Transverse colon (tissue), 4 donors: ENCODE measurements at regions of chr16 and their contacts with region 1.

Region 1: DNA sequence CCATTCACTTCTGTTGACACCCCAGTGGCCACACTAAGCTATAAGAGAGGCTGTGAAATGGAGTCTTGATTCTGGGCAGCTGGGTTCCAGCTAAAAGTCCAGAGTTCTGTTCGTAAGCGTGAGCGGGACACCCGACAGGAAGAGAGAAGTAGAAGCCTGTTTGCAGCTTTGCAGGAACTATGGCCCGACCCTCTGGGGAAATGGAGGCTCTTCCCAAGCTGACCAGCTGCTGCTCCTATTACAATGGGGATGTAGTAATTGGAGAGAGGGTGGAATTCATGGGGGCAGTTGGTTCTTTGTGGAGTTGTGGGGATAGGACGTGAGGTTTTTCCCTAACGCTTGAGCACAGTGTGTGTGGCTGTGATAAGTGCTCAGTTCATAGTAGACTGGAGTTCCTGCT is 28.4 kb downstream of the UBALD1 start:
- DNase-seq: no peak
- H3K4me3 ChIP-seq: no peak overlapping the region
- H3K27ac ChIP-seq: no peak overlapping the region
- H3K4me1 ChIP-seq: no peaks in the 10 kb centered on the region
- H3K27me3 ChIP-seq: peaks cover 4% of the 10 kb centered on the region
- CTCF ChIP-seq: no peak
- EP300 ChIP-seq: no peak
- POLR2A ChIP-seq: no peak

Region 2: GRCh38 chr16:4475880-4476788 is 110.2 kb before region 1 on chr16 and contains the start of gene HMOX2:
- in situ Hi-C with region 1: no loop called
- intact Hi-C with region 1: no loop called
- DNase-seq: peak; percentile 96
- H3K4me3 ChIP-seq: peak within 1 kb of the TSS; percentile 77 to 96 (median 89)
- H3K27ac ChIP-seq: peak within 1 kb of the TSS; percentile 90 to 94 (median 92)
- H3K4me1 ChIP-seq: peaks cover 0 to 31% (median 20%) of the 10 kb centered on the region in 4 donors
- H3K27me3 ChIP-seq: no peaks in the 10 kb centered on the region
- CTCF ChIP-seq: peak in 4 of 5 experiments; percentile 25 to 47 (median 41)
- EP300 ChIP-seq: no peak
- POLR2A ChIP-seq: peak; percentile 94
- total RNA-seq, gene HMOX2: 46.4 to 495 (median 55.7) TPM

Region 3: GRCh38 chr16:4649744-4650442 is 63.6 kb after region 1 on chr16:
- in situ Hi-C with region 1: no loop called
- intact Hi-C with region 1: loop called (anchors 5 kb)
- DNase-seq: no peak
- H3K4me3 ChIP-seq: no peak overlapping the region
- H3K27ac ChIP-seq: no peak overlapping the region
- H3K4me1 ChIP-seq: peaks cover 3 to 23% (median 16%) of the 10 kb centered on the region in 4 donors
- H3K27me3 ChIP-seq: no peaks in the 10 kb centered on the region
- CTCF ChIP-seq: no peak
- EP300 ChIP-seq: no peak
- POLR2A ChIP-seq: no peak